Activated B cell treated with CpG ODN at 0.5 μM for 24 hours (primary cell): ENCODE measurements at regions of chr7 and their contacts with region 1.

Region 1: GRCh38 chr7:90708841-90709317 is 112.8 kb downstream of the CDK14 start:
- DNase-seq: no peak
- ATAC-seq: peak; percentile 40
- H3K4me3 Mint-ChIP-seq: peak overlapping the region; percentile 86
- H3K27ac Mint-ChIP-seq: peak overlapping the region; percentile 96
- H3K4me1 Mint-ChIP-seq: peaks cover 81% of the 10 kb centered on the region
- H3K27me3 Mint-ChIP-seq: no peaks in the 10 kb centered on the region
- CTCF ChIP-seq: no peak

Region 2: GRCh38 chr7:90346336-90347125 is 362.3 kb before region 1 on chr7 and contains the start of gene GTPBP10:
- CTCF ChIA-PET with region 1: no interaction called
- POLR2A ChIA-PET with region 1: no interaction called
- intact Hi-C with region 1: loop called (anchors 1 kb)
- DNase-seq: peak; percentile 90
- ATAC-seq: peak; percentile 97
- H3K4me3 Mint-ChIP-seq: peak within 1 kb of the TSS; percentile 96
- H3K27ac Mint-ChIP-seq: peak within 1 kb of the TSS; percentile 98
- H3K4me1 Mint-ChIP-seq: peaks cover 35% of the 10 kb centered on the region
- H3K27me3 Mint-ChIP-seq: no peaks in the 10 kb centered on the region
- CTCF ChIP-seq: peak; percentile 37
- total RNA-seq, gene GTPBP10: 28.8 and 29.5 TPM in 2 replicates

Region 3: GRCh38 chr7:90655566-90655965 is 53.3 kb before region 1 on chr7:
- CTCF ChIA-PET with region 1: no interaction called
- POLR2A ChIA-PET with region 1: interaction called, 3 read pairs
- intact Hi-C with region 1: loop called (anchors 2 kb)
- DNase-seq: no peak
- ATAC-seq: peak; percentile 56
- H3K4me3 Mint-ChIP-seq: peak overlapping the region; percentile 16
- H3K27ac Mint-ChIP-seq: peak overlapping the region; percentile 82
- H3K4me1 Mint-ChIP-seq: peaks cover 54% of the 10 kb centered on the region
- H3K27me3 Mint-ChIP-seq: no peaks in the 10 kb centered on the region
- CTCF ChIP-seq: no peak

Region 4: DNA sequence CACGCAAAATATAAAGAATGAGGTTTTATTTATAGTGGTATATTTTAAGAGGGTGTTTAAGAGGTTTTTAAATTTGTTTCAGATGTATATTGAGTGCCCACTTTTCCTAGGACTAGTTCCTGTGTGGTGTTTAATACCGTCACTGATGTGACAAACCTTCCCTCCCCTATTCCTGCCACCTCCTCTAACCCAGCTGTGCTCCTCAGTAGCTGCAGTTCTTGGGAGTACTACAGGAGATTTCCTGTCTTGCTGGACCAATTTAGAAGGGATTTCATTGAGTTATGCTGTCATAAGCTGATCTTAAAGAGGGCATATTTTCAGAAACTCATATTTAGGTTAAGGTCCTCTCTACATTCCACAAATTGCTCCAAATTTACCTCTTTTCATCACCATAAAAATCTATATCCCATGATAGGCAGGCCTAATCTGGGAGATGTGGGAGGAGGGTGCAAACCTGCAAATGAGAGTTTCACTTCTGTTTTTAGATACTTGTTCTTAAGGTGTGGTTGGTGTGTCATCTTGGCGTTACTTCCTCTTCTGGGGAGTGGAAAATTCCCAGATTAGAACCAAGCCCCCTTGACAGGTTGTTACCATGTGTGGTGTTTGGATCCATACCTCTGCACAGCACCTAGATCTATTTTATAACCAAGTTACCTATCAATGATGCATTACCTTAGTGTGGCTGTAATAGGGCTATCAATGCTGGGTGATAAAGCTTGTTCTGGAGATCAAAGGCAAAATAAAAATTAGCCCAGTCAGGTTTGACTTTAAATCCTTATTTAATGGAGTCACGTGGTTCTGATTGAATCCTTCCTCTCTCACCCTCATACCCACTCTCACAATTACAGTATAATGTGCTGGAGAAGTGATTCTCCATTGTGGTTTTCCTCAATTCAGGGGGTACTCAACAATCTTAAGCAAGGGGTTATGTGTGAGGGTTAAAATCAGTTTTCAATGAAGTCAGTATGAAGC is 28.4 kb after region 1 on chr7:
- CTCF ChIA-PET with region 1: interaction called, 5 read pairs
- POLR2A ChIA-PET with region 1: interaction called, 15 read pairs
- intact Hi-C with region 1: loop called (anchors 1 kb)
- DNase-seq: no peak
- ATAC-seq: peak; percentile 92
- H3K4me3 Mint-ChIP-seq: peak overlapping the region; percentile 59
- H3K27ac Mint-ChIP-seq: peak overlapping the region; percentile 95
- H3K4me1 Mint-ChIP-seq: peaks cover 88% of the 10 kb centered on the region
- H3K27me3 Mint-ChIP-seq: no peaks in the 10 kb centered on the region
- CTCF ChIP-seq: no peak

Region 5: GRCh38 chr7:90843472-90843871 is 134.6 kb after region 1 on chr7:
- CTCF ChIA-PET with region 1: no interaction called
- POLR2A ChIA-PET with region 1: no interaction called
- intact Hi-C with region 1: no loop called
- DNase-seq: no peak
- ATAC-seq: no peak
- H3K4me3 Mint-ChIP-seq: no peak overlapping the region
- H3K27ac Mint-ChIP-seq: no peak overlapping the region
- H3K4me1 Mint-ChIP-seq: peaks cover 49% of the 10 kb centered on the region
- H3K27me3 Mint-ChIP-seq: no peaks in the 10 kb centered on the region
- CTCF ChIP-seq: no peak

Region 6: DNA sequence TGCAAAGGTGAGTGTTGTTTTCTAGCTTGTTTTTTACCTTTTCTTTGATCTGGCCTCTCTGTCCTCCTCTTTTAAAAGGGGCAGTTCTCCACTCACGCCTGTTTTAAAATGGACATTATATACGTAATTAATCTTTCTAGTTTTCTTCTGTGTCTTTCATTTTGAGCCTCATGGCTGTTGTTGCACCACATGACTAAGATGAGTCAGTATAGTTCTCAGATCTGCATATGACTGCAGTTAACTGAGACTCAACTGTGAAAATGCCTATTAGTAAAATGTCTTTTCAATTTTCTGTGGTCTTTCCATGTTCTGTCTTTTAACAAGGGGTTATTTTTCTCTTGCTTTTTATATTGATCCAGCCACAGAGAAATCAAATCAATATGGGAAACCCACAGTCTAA is 183.3 kb after region 1 on chr7:
- CTCF ChIA-PET with region 1: interaction called, 4 read pairs
- POLR2A ChIA-PET with region 1: no interaction called
- intact Hi-C with region 1: loop called (anchors 5 kb)
- DNase-seq: no peak
- ATAC-seq: peak; percentile 64
- H3K4me3 Mint-ChIP-seq: peak overlapping the region; percentile 8
- H3K27ac Mint-ChIP-seq: peak overlapping the region; percentile 73
- H3K4me1 Mint-ChIP-seq: peaks cover 49% of the 10 kb centered on the region
- H3K27me3 Mint-ChIP-seq: no peaks in the 10 kb centered on the region
- CTCF ChIP-seq: no peak

Region 7: GRCh38 chr7:91165006-91165845 is 456.3 kb after region 1 on chr7:
- CTCF ChIA-PET with region 1: no interaction called
- POLR2A ChIA-PET with region 1: no interaction called
- intact Hi-C with region 1: loop called (anchors 2 kb)
- DNase-seq: no peak
- ATAC-seq: peak; percentile 88
- H3K4me3 Mint-ChIP-seq: peak overlapping the region; percentile 36
- H3K27ac Mint-ChIP-seq: peak overlapping the region; percentile 92
- H3K4me1 Mint-ChIP-seq: peaks cover 35% of the 10 kb centered on the region
- H3K27me3 Mint-ChIP-seq: no peaks in the 10 kb centered on the region
- CTCF ChIP-seq: no peak